ENCODE measurements at regions of chr11 and their contacts with region 1.

Region 1: DNA sequence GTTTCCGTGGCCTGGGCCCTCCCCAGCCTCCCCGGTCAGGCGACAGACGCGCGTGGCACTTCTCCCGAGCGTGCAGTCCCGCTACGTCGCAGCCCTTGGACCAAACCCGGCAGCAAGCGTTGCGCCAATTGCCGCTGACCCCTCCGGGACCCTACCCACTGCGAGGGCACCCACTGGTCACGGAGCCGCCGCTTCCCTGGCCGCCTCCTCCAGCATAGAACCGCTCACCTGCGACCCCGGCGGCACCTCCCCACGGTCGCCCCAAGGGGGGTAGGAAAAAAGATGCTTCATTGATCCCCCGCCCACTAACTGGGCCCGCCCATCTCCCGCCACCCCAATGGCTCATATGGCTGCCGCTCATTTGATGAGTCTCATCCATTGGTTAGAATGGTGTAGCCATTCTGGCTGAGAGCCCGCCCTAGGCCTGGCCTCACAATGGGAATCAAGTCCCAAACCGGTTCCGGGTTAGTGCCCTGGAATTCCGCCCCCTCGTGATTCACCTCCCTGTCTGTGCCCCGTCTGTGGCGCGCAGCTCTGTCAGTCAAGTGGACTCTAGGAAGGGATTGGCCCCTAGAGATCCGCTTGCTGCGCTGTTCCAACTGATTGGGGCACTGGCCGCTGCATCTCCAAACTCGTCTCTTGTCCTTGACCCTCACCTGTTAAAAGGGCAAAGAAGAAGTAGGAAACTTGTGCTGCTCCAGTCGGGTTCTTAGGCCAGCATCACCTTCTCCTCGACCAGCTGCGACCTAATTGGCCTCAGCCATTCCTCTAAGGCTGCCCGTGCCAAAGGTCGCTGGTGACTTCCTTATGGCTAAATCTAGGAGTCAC is at the start of gene MSANTD4:
- DNase-seq: peak; percentile 99 to 100 (median 100)
- ATAC-seq: peak; percentile 99
- H3K4me3 ChIP-seq: peak within 1 kb of the TSS; percentile 66 to 96 (median 80)
- H3K27ac ChIP-seq: peak within 1 kb of the TSS; percentile 53 to 90 (median 84)
- H3K4me1 ChIP-seq: peaks cover 0 to 45% (median 27%) of the 10 kb centered on the region in 12 donors
- H3K27me3 ChIP-seq: no peaks in the 10 kb centered on the region
- CTCF ChIP-seq: peak in 2 of 12 donors; percentile 10 to 28
- POLR2A ChIP-seq: peak in 1 of 2 donors; percentile 26
- total RNA-seq, gene MSANTD4: 13.3 to 27.2 (median 19.7) TPM

Region 2: GRCh38 chr11:105609341-105609781 is 412.8 kb before region 1 on chr11:
- intact Hi-C with region 1: no loop called
- DNase-seq: no peak
- ATAC-seq: no peak
- H3K4me3 ChIP-seq: peak overlapping the region in 3 of 12 donors; percentile 34 to 50 (median 44)
- H3K27ac ChIP-seq: no peak overlapping the region
- H3K4me1 ChIP-seq: peaks cover 0 to 20% (median 9%) of the 10 kb centered on the region in 12 donors
- H3K27me3 ChIP-seq: peaks cover 0 to 53% (median 32%) of the 10 kb centered on the region in 9 donors
- CTCF ChIP-seq: no peak
- POLR2A ChIP-seq: no peak

Region 3: DNA sequence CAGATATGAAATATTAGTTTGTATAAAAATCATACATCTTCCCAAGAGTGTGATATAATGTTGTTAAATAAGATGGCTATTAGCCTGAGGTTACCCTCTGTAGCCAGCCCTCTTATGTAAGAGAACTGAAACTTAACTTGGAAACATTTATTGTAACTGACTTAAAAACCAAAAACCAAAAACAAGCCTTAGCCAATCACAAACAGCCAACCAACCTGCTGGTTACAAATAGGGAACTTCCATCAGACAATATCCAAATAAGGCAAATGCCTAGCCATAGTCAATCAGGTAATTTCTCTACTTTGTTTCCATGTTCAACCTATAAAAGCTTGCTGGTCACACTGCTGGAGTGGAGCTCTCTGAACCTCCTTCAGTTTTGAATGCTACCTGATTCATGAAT is 40.8 kb after region 1 on chr11:
- intact Hi-C with region 1: loop called in 1 of 10 experiments (anchors 5 kb)
- DNase-seq: no peak
- ATAC-seq: no peak
- H3K4me3 ChIP-seq: no peak overlapping the region
- H3K27ac ChIP-seq: no peak overlapping the region
- H3K4me1 ChIP-seq: no peaks in the 10 kb centered on the region
- H3K27me3 ChIP-seq: no peaks in the 10 kb centered on the region
- CTCF ChIP-seq: no peak
- POLR2A ChIP-seq: no peak

Region 4: GRCh38 chr11:106076919-106077608 is 54.9 kb after region 1 on chr11 and contains the start of gene KBTBD3:
- intact Hi-C with region 1: loop called in 9 of 10 experiments (anchors 1 to 5 kb)
- DNase-seq: peak; percentile 99
- ATAC-seq: peak; percentile 97 to 99 (median 98)
- H3K4me3 ChIP-seq: peak within 1 kb of the TSS; percentile 64 to 91 (median 82)
- H3K27ac ChIP-seq: peak within 1 kb of the TSS; percentile 85 to 98 (median 93)
- H3K4me1 ChIP-seq: peaks cover 4 to 57% (median 35%) of the 10 kb centered on the region in 12 donors
- H3K27me3 ChIP-seq: no peaks in the 10 kb centered on the region
- CTCF ChIP-seq: peak in 9 of 12 donors; percentile 13 to 57 (median 43)
- POLR2A ChIP-seq: peak; percentile 37 to 82
- total RNA-seq, gene KBTBD3: 2.8 to 17.3 (median 9.4) TPM

Region 5: GRCh38 chr11:106159836-106160235 is 137.7 kb after region 1 on chr11:
- intact Hi-C with region 1: no loop called
- DNase-seq: no peak
- ATAC-seq: no peak
- H3K4me3 ChIP-seq: no peak overlapping the region
- H3K27ac ChIP-seq: no peak overlapping the region
- H3K4me1 ChIP-seq: no peaks in the 10 kb centered on the region
- H3K27me3 ChIP-seq: no peaks in the 10 kb centered on the region
- CTCF ChIP-seq: no peak
- POLR2A ChIP-seq: no peak